Activated CD4-positive, alpha-beta memory T cell treated with anti-CD3 and anti-CD28 coated beads, Interleukin-2, amount 10 ng/mL, durations not matched to agents 7 days and 5 days (primary cell): ENCODE measurements at regions of chr19 and their contacts with region 1.

Region 1: DNA sequence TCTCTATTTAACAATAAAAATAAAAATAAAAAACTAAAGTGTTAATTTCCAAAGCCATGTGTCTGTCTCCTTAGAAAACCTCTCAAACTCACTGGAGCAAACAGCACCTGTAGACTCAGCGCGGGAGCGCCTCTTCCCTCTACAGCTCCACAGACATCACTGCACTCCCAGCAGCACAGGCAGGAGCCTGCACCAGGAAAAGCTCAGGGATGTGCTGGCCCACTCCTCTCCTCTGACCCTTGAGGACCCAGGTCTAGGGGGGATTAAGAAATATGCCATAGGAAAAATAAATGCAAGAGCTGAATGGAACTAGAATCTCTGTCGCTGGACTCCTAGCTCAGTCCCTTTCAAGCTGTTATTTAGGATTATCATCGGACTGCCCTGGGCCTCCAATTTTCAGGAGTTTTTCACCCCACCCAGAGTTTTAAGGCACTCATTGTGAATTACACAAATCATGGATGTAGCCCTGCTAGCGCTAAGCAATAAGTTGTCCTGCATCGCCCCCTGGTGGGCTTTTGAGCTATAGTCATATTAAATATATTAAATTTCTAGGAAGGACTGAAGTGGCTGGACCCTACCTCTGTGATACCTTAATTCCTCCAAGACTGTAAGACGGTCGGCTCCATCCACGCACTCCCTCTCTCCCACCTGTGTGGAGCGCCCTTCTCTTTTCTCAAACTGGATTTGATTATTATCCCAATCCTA is 333.9 kb downstream of the UQCRFS1 start:
- DNase-seq: peak; percentile 61
- H3K4me3 Mint-ChIP-seq: no peak overlapping the region
- H3K27ac Mint-ChIP-seq: no peak overlapping the region
- H3K4me1 Mint-ChIP-seq: no peaks in the 10 kb centered on the region
- H3K27me3 Mint-ChIP-seq: peaks cover 2% of the 10 kb centered on the region

Region 2: DNA sequence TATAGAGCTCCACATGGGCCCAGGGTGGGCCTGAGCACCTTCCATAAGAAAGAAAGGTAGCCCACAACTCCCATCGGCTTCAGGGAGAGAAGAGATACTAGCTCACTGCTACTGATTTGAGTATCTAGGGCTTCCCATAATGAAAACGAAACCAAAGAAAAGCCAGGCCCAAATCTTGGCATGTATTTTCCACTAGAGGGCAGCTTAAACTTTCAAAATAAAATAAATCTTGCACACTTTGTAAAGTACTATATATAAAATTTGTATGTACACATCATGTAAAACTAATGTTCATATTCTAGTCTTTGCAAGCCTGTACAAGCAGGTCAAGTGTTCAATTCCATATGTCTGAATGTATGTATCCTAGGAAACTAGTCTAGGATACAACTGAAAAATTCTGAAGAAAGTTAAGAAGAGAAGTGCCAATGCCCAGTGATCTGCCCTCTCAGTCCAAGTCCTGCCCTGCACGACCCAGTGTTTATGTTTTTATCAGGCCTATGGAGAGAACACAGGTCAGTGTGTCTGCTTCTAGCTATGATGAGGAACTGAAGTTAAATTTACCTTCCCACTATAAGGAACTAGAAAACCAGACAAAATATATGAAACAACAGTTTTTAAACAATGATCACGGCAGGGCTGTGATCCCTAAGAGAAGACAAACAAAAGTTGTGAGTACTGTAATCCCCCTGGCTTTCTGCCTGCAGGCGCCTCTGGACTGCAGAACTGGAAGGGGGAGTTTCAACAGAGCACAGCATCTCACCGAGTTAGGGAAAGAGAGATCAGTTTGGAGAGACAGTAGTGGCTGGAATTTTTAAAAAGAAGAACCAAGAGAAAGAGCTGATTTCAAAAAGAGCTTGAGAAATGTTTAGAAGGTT is 141.8 kb before region 1 on chr19:
- CTCF ChIA-PET with region 1: interaction called, 38 read pairs
- POLR2A ChIA-PET with region 1: no interaction called
- DNase-seq: no peak
- H3K4me3 Mint-ChIP-seq: no peak overlapping the region
- H3K27ac Mint-ChIP-seq: no peak overlapping the region
- H3K4me1 Mint-ChIP-seq: peaks cover 6% of the 10 kb centered on the region
- H3K27me3 Mint-ChIP-seq: no peaks in the 10 kb centered on the region